ENCODE measurements at regions of chr12 and their contacts with region 1.

Region 1: GRCh38 chr12:32312049-32312670 is 87.2 kb upstream of the FGD4 start:
- DNase-seq: peak; percentile 85
- H3K4me3 ChIP-seq: no peak overlapping the region
- H3K27ac ChIP-seq: peak overlapping the region; percentile 22
- H3K4me1 ChIP-seq: peaks cover 10% of the 10 kb centered on the region
- H3K27me3 ChIP-seq: no peaks in the 10 kb centered on the region
- CTCF ChIP-seq: peak; percentile 33 to 39
- POLR2A ChIP-seq: no peak

Region 2: DNA sequence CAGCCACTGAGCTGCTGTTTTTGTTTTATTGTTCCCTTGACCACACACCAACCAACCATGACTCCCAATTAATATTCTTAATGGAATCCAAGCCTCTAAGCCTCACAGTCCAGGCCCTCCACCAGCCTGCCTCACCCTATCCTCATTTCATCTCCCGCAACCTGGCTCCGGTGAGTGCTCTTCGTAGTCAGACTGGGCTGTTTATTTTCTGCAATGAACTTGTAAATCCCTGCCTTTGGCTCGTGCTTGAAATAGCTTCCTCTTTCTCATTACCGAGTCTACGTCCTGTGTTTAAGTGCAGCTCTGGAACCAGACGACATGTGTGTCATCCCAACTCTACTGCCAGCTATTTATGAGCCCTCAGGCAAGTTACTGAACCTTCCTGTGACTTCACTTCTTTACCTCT is 665.1 kb before region 1 on chr12:
- CTCF ChIA-PET with region 1: interaction called, 140 read pairs
- POLR2A ChIA-PET with region 1: no interaction called
- dilution Hi-C with region 1: no loop called
- intact Hi-C with region 1: no loop called
- DNase-seq: no peak
- H3K4me3 ChIP-seq: no peak overlapping the region
- H3K27ac ChIP-seq: no peak overlapping the region
- H3K4me1 ChIP-seq: no peaks in the 10 kb centered on the region
- H3K27me3 ChIP-seq: no peaks in the 10 kb centered on the region
- CTCF ChIP-seq: no peak
- POLR2A ChIP-seq: no peak

Region 3: GRCh38 chr12:31682136-31682962 is 629.8 kb before region 1 on chr12:
- CTCF ChIA-PET with region 1: interaction called, 22 read pairs
- POLR2A ChIA-PET with region 1: no interaction called
- dilution Hi-C with region 1: no loop called
- intact Hi-C with region 1: loop called (anchors 1 kb)
- DNase-seq: peak; percentile 87
- H3K4me3 ChIP-seq: no peak overlapping the region
- H3K27ac ChIP-seq: no peak overlapping the region
- H3K4me1 ChIP-seq: no peaks in the 10 kb centered on the region
- H3K27me3 ChIP-seq: no peaks in the 10 kb centered on the region
- CTCF ChIP-seq: peak; percentile 69 to 71
- POLR2A ChIP-seq: no peak

Region 4: DNA sequence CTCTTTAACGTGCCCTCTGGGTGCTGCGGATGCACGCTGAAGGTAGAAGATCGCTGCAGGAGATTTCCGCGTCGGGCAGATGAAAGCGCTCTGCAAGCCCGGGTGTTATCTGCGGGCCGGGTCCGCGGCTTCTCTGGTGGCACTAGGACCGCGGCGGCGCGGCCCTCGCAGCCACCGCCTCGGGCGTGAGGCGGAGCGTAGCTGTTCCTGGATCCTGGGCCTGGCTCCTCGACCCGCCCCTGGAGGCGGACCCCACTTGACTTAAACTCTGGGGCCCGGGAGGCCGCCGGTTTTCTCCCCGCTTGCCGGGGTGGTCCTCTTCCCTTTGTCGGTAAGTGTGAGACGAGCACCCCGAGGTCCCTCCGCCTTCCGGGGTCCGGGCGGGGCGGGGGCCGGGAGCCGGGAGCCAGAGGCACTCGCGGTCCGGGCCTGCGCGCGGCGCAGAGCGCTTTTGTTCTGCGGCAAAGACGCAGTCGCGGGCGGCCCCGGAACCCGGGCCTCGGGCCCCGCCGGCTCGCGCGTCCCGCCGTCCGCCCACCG is 352.9 kb before region 1 on chr12 and contains the start of gene RESF1:
- CTCF ChIA-PET with region 1: interaction called, 10 read pairs
- POLR2A ChIA-PET with region 1: no interaction called
- dilution Hi-C with region 1: no loop called
- intact Hi-C with region 1: no loop called
- DNase-seq: peak; percentile 88
- H3K4me3 ChIP-seq: peak within 1 kb of the TSS; percentile 72 to 98 (median 88)
- H3K27ac ChIP-seq: peak within 1 kb of the TSS; percentile 74
- H3K4me1 ChIP-seq: peaks cover 21% of the 10 kb centered on the region
- H3K27me3 ChIP-seq: no peaks in the 10 kb centered on the region
- CTCF ChIP-seq: no peak
- POLR2A ChIP-seq: peak; percentile 90
- total RNA-seq, gene RESF1: 62.1 and 70.0 TPM in 2 replicates

Region 5: GRCh38 chr12:32069071-32069470 is 243.1 kb before region 1 on chr12:
- CTCF ChIA-PET with region 1: interaction called, 90 read pairs
- POLR2A ChIA-PET with region 1: no interaction called
- dilution Hi-C with region 1: no loop called
- intact Hi-C with region 1: no loop called
- DNase-seq: peak; percentile 83
- H3K4me3 ChIP-seq: no peak overlapping the region
- H3K27ac ChIP-seq: no peak overlapping the region
- H3K4me1 ChIP-seq: peaks cover 12% of the 10 kb centered on the region
- H3K27me3 ChIP-seq: peaks cover 0 to 2% of the 10 kb centered on the region in 2 experiments
- CTCF ChIP-seq: no peak
- POLR2A ChIP-seq: no peak

Region 6: DNA sequence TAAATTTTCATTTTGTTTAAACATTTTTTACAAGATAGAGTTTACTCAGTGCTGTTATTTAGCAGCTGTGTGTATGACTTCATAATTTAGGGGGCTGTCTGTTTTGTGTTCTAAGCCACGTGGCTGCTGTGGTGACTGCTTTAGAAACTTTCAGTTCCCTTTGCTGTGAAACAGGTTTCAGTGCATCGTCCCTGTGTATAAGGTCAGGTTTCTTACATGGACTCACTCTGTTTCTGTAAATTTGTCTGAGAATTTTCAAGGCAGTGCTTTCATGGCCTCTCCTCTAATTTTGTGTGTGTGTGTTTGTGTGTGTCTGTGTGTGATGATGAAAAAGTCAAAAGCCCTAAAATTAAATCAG is 173.1 kb before region 1 on chr12:
- CTCF ChIA-PET with region 1: interaction called, 10 read pairs
- POLR2A ChIA-PET with region 1: no interaction called
- dilution Hi-C with region 1: no loop called
- intact Hi-C with region 1: no loop called
- DNase-seq: peak; percentile 39
- H3K4me3 ChIP-seq: peak overlapping the region in 1 of 3 experiments; percentile 22
- H3K27ac ChIP-seq: no peak overlapping the region
- H3K4me1 ChIP-seq: peaks cover 7% of the 10 kb centered on the region
- H3K27me3 ChIP-seq: no peaks in the 10 kb centered on the region
- CTCF ChIP-seq: no peak
- POLR2A ChIP-seq: no peak

Region 7: GRCh38 chr12:32296567-32296966 is 15.6 kb before region 1 on chr12:
- CTCF ChIA-PET with region 1: interaction called, 11 read pairs
- POLR2A ChIA-PET with region 1: interaction called, 3 read pairs
- dilution Hi-C with region 1: no loop called
- intact Hi-C with region 1: no loop called
- DNase-seq: no peak
- H3K4me3 ChIP-seq: no peak overlapping the region
- H3K27ac ChIP-seq: no peak overlapping the region
- H3K4me1 ChIP-seq: no peaks in the 10 kb centered on the region
- H3K27me3 ChIP-seq: no peaks in the 10 kb centered on the region
- CTCF ChIP-seq: no peak
- POLR2A ChIP-seq: no peak

Measured in endothelial cell of umbilical vein (primary cell).